Activated CD4-positive, alpha-beta memory T cell treated with anti-CD3 and anti-CD28 coated beads, Interleukin-2, amount 10 ng/mL, durations not matched to agents 7 days and 5 days (primary cell): ENCODE measurements at regions of chr10 and their contacts with region 1.

Region 1: DNA sequence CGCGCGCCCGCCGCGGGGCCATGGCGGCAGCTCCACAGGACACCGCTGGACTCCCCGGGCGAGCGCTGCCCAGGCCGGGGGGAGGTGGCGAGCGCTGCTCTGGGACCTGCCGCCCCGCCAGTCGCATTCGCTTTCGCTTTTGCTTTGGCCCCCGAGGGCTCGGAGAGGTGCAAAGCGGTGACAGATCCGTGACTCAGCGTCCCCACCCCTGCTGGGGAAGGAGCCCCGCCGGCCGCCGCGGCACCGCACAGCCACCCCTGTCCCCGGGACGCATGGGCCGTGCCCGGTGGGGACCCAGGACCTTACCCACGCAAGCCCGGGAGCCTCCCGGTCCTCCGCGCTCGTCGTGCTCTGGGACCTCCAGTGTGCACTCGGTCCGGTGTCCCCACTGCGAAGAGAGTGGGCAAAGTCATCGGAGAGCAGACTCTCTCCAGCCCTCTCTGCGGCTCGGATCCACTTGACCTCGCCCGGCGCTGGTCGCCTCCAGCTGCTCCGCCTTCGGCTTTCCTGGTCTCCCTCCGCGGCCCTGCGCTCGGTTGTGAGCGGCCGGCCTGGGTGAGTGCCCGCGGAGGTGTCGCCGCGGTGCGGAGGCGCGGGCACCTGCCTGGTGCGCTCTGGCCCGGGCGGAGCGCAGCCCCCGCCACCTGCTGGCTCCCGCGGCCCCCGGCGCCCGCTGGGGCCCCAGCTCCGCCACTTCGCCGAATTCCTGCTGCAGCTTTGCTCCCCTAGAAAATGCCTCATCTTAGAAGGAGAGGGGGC is at the start of gene IL15RA:
- DNase-seq: peak; percentile 91
- H3K4me3 Mint-ChIP-seq: peak within 1 kb of the TSS; percentile 91
- H3K27ac Mint-ChIP-seq: peak within 1 kb of the TSS; percentile 95
- H3K4me1 Mint-ChIP-seq: peaks cover 30% of the 10 kb centered on the region
- H3K27me3 Mint-ChIP-seq: no peaks in the 10 kb centered on the region
- total RNA-seq, gene IL15RA: 22.1 to 24.5 TPM

Region 2: DNA sequence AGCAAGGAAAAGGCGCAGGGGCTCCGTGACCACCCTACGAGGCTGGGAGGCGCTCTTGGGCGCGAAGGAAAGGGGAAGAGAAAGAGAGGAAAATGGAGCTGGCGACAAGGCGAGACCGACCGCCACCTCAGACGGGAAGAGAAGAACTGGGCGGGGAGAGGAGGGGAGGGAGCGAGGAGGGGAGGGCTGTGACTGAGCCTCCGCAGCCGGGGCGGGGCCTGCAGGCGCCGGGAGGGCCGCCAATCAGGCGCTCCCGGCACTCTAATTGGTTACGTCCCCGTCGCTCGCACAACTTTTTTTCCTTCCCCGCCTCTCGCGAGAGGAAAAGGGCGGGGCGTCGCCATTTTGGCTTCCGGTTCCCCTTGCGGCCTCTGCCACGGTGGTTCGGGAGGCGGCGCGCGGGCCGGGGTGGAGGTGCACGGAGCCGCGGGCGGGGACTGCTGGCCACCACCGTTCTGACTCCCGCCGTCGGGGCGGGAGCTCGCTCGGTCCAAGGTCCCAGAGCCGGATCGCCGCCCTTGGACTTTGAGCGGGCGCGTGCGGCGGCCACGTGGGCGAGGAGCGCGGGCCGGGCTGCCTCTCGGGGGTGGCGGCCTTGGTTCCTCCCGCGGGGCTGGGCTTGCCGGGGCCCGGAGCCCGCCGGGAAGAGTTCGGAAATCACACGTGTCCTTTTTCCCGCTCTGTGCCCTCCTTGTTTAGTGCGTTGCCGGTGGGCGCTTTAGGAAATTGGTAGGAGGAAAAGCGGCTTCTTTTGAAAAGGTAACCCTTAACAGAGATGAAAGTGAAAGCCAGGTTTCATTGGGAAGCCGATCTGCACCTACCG is 164.2 kb before region 1 on chr10 and contains the start of gene GDI2:
- CTCF ChIA-PET with region 1: no interaction called
- POLR2A ChIA-PET with region 1: interaction called, 21 read pairs
- DNase-seq: peak; percentile 97
- H3K4me3 Mint-ChIP-seq: peak within 1 kb of the TSS; percentile 92
- H3K27ac Mint-ChIP-seq: peak within 1 kb of the TSS; percentile 87
- H3K4me1 Mint-ChIP-seq: peaks cover 57% of the 10 kb centered on the region
- H3K27me3 Mint-ChIP-seq: no peaks in the 10 kb centered on the region
- total RNA-seq, gene GDI2: 218 to 220 TPM

Region 3: DNA sequence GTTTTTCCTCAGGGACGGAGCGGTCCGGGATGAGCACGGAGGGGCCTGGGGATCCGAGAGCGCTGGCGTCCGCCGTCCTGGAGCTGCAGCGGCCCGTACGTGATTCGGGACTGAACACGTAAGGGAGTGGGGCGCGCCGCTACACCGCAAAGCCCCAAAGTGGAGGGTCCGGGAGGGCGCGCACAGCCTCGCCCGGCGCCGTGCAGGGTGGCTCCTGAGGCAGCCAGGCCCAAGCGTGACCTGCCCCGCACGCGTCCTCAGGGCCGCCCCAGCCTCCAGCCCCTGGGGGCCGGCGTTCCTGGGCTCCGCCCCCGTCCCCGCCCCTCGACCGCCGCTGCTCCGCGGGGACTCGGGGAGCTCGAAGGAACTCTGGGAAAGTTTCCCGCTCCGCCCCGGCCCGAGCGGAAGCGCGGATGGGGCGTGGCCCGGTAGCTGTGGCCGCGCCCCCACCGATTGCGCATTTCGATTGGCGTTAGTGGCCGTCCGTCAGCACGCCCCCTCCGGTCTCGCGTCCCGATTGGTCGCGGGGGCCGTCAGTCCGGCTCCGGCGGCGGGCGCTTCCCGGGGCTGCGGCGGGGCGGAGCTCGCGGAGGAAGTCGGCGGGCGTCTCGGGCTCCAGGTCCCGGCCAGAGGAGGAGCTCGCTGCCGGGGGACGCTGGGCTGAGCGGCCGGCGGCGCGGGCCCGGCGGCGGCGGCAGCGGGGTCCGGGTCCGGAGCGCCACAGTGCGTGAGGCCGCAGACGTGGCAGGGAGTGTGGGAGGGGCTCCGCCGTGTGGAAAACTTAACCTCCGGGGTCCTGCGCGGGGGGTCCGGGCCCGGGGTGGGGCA is 87.8 kb before region 1 on chr10 and contains the starts of genes ANKRD16 and FBH1:
- CTCF ChIA-PET with region 1: interaction called, 5 read pairs
- POLR2A ChIA-PET with region 1: interaction called, 31 read pairs
- DNase-seq: peak; percentile 98
- H3K4me3 Mint-ChIP-seq: peak within 1 kb of the TSS; percentile 91
- H3K27ac Mint-ChIP-seq: peak within 1 kb of the TSS; percentile 68
- H3K4me1 Mint-ChIP-seq: peaks cover 47% of the 10 kb centered on the region
- H3K27me3 Mint-ChIP-seq: no peaks in the 10 kb centered on the region
- total RNA-seq, gene ANKRD16: 3.3 to 5.4 TPM
- total RNA-seq, gene FBH1: 54.8 to 61.6 TPM

Region 4: DNA sequence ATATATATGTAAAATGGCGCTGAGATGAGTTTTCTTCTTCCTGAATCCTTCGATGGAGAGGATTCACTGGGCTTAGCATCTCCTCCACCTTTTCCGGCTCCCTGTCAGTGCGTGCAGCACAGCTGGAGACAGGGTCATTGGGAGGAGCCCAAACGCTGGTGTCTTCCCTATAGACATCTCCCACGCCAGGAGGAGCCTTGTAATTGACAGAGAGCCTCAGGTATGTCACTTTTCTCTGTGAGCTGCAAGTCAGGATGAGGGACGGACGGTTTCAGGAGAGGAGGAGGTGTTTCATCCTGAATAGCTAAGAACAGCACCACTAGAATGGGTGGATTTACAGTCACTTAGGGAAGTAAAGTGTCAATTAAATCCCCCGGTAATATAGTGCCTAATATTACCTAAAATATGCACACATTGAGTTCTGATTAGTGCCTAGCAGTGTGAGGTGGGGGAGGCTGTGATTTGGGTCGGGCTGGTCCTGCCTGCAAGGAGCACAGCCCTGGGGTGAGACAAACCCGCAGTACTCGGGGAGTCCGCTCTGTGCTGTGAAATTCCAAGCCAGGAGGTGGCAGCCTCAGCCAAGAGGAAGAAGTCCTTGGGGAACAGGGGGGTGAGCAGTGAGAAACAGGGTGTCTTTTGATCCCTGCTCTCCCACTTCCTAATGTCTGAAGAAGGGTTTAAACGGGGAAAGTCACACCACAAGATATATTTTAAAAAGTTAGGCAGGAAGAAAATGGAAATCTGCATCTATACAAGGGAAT is 28.5 kb before region 1 on chr10:
- CTCF ChIA-PET with region 1: no interaction called
- POLR2A ChIA-PET with region 1: no interaction called
- DNase-seq: peak; percentile 33
- H3K4me3 Mint-ChIP-seq: no peak overlapping the region
- H3K27ac Mint-ChIP-seq: no peak overlapping the region
- H3K4me1 Mint-ChIP-seq: peaks cover 7% of the 10 kb centered on the region
- H3K27me3 Mint-ChIP-seq: no peaks in the 10 kb centered on the region

Region 5: GRCh38 chr10:6014241-6014761 is 36.7 kb after region 1 on chr10:
- CTCF ChIA-PET with region 1: interaction called, 7 read pairs
- POLR2A ChIA-PET with region 1: interaction called, 17 read pairs
- DNase-seq: peak; percentile 60
- H3K4me3 Mint-ChIP-seq: no peak overlapping the region
- H3K27ac Mint-ChIP-seq: peak overlapping the region; percentile 90
- H3K4me1 Mint-ChIP-seq: peaks cover 61% of the 10 kb centered on the region
- H3K27me3 Mint-ChIP-seq: no peaks in the 10 kb centered on the region

Region 6: DNA sequence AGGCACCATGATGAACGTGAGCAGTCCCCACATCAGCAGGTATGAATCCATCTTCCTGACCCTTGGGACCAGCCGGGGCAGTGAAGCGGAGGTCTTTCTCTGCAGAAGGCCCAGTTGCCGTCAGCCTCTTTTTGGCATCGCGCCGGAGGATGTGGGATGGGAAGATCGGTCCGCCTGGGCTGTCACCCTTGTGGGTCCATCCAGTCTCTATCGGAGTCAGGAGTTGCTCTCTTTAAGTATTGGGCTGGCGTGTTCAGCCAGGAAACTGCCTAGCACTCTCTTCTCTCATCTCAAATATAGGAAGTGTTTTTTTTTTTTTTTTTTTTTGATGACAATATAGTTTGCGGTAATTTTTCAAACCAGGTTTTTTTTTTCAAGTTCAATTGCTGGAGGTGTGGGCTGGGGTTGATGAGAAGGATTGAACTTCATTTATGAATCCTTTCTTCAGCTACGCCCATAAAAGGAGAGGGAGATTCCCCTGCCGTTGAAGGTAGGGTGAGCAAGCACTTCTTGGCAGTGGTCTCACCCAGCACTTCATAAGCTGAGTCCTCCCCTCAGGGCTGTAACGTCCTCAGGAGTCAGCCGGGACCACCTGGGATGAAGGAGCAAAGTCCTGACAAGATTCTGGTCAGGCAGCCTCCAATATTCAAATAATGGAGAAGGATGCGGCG is 84.6 kb after region 1 on chr10 and contains the start of gene IL2RA:
- CTCF ChIA-PET with region 1: interaction called, 3 read pairs
- POLR2A ChIA-PET with region 1: interaction called, 10 read pairs
- DNase-seq: peak; percentile 77
- H3K4me3 Mint-ChIP-seq: peak within 1 kb of the TSS; percentile 90
- H3K27ac Mint-ChIP-seq: peak within 1 kb of the TSS; percentile 90
- H3K4me1 Mint-ChIP-seq: peaks cover 71% of the 10 kb centered on the region
- H3K27me3 Mint-ChIP-seq: no peaks in the 10 kb centered on the region
- total RNA-seq, gene IL2RA: 437 to 446 TPM

Region 7: GRCh38 chr10:6348096-6348874 is 370.6 kb after region 1 on chr10:
- CTCF ChIA-PET with region 1: no interaction called
- POLR2A ChIA-PET with region 1: no interaction called
- DNase-seq: peak; percentile 87
- H3K4me3 Mint-ChIP-seq: peak overlapping the region; percentile 64
- H3K27ac Mint-ChIP-seq: peak overlapping the region; percentile 92
- H3K4me1 Mint-ChIP-seq: peaks cover 47% of the 10 kb centered on the region
- H3K27me3 Mint-ChIP-seq: peaks cover 3% of the 10 kb centered on the region